Left cardiac atrium (tissue), 4 donors: ENCODE measurements at regions of chr11 and their contacts with region 1.

Region 1: GRCh38 chr11:117226388-117227385 is 5.2 kb downstream of the PCSK7 start:
- DNase-seq: peak; percentile 46
- ATAC-seq: peak; percentile 68 to 70

Region 2: DNA sequence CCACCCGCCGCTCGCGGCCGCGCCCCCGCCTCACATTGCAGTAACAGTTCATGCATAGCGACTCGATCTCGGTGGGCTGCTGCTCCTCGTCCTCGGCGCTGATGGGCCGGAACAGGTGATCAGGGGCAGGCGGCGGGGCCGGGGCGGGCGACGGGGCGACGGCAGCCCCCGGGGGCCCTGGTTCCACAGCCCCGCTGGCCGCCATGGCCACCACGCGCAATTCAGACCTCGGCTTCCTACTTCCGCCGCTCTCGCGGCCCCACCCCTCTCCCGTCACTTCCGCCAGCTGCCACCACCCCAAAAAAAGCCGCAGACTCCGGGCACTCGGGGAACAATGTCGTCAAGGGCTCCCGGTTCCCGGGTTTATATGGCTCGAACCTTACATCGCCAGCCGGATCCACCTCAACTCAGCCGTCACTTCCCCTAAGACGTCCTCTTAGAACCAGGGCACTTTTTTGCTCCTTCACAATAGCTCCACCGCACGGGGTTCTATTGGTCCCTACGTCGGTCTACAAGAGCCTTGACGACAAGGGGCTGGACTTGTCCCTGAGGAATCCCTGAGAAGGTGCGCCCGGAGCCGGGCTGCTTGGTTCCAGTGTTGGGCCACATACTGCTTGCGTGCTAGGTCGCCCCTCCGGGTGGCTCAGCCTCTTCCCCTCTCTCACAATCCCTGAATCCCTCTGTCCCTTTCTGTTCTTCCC is 438.8 kb before region 1 on chr11 and contains the start of gene ZPR1:
- intact Hi-C with region 1: loop called (anchors 5 to 10 kb)
- DNase-seq: peak; percentile 88
- ATAC-seq: peak; percentile 88 to 91
- total RNA-seq, gene ZPR1: 23.0 to 33.9 TPM

Region 3: DNA sequence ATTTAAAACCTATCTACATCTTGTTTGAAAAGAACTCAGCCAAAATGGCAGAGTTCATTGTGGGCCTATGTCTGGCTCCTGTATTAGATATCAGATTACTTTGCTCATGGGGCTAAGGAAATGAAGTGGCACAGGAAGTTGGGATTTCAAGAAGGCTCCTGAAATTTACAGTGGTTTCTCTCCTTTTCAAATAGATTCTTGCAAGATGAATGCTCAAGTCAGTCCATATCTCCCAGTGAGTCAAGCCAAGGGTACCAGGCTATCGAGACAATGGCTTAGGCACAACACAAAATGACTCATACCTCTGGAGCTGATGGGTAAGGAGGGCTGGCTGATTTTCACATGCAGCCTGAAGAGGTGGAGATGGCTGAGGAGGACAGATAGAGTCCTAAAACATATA is 365.1 kb before region 1 on chr11:
- intact Hi-C with region 1: loop called in 1 of 2 experiments (anchors 10 kb)
- DNase-seq: no peak
- ATAC-seq: no peak

Region 4: DNA sequence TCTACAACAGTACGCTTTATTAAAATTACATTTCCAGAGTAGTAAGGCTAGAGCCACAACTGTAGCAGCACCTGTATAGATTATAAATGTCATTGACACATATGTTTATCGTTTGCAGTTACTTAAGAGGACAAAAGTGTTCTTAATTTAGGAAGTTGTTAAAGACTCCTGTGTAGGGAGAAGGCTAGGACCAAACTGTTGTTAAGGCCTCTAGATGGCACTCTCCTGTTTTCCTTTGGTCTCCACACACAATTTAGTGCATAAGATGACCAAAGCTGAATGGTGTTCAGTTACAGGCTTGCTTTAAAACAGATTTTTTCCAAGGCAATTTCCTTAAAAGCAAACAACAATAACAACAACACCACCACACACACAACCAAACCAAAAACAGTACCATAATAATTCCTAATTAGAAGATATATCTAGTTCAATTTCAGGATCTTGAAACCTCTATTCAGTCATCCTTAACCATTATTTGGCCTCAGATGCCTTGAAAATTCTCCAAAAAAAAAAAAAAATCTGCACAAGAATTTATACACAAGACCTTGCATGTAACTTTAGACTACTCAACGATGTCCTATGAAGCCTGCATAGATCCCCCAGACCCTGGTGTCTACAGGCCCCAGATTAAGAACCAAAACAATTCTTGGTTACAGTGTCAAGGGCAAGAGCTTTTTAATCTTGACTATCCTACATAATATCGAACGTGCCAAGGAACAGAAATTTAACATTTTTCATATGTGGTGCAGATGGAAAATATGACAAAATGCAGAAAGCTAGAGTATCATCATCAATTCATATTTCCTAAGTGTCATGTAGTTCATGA is 346.7 kb before region 1 on chr11:
- intact Hi-C with region 1: loop called in 1 of 2 experiments (anchors 10 kb)
- DNase-seq: no peak
- ATAC-seq: peak; percentile 90 to 96

Region 5: GRCh38 chr11:117178210-117179034 is 48.3 kb before region 1 on chr11 and contains the start of gene SIDT2:
- intact Hi-C with region 1: loop called in 1 of 2 experiments (anchors 5 kb)
- DNase-seq: peak; percentile 97
- ATAC-seq: peak; percentile 94 to 96
- total RNA-seq, gene SIDT2: 40.8 to 48.5 TPM

Region 6: DNA sequence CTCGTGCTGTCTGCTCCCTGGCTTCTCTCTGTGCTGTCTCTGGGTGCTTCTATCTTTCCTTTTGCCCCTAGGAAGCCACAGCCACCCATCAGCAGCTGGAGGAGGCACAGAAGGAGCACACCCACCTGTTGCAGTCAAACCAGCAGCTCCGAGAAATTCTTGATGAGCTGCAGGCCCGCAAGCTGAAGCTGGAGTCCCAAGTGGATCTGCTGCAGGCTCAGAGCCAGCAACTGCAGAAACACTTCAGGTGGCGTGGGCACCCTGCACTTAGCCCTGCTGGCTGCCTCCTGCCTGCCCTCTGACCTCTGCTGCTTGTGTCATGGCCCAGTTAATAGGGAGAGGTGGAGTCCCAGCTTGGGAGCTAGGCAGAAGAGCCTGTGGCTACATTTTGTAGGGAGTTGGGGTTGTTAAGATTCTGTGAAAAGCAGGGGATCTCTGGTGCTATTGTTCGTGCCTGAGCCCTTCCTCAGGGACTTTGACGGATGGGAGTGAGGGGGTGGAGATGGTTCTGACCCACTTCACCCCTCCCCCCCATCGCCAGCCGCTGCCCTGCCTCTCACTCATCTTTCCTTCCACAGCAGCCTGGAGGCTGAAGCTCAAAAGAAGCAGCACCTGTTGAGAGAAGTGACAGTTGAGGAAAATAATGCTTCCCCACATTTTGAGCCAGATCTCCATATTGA is 168.9 kb after region 1 on chr11:
- intact Hi-C with region 1: no loop called
- DNase-seq: no peak
- ATAC-seq: no peak

Region 7: GRCh38 chr11:117690484-117691217 is 464.0 kb after region 1 on chr11:
- intact Hi-C with region 1: no loop called
- DNase-seq: no peak
- ATAC-seq: no peak